ENCODE measurements at regions of chr10 and their contacts with region 1.

Region 1: DNA sequence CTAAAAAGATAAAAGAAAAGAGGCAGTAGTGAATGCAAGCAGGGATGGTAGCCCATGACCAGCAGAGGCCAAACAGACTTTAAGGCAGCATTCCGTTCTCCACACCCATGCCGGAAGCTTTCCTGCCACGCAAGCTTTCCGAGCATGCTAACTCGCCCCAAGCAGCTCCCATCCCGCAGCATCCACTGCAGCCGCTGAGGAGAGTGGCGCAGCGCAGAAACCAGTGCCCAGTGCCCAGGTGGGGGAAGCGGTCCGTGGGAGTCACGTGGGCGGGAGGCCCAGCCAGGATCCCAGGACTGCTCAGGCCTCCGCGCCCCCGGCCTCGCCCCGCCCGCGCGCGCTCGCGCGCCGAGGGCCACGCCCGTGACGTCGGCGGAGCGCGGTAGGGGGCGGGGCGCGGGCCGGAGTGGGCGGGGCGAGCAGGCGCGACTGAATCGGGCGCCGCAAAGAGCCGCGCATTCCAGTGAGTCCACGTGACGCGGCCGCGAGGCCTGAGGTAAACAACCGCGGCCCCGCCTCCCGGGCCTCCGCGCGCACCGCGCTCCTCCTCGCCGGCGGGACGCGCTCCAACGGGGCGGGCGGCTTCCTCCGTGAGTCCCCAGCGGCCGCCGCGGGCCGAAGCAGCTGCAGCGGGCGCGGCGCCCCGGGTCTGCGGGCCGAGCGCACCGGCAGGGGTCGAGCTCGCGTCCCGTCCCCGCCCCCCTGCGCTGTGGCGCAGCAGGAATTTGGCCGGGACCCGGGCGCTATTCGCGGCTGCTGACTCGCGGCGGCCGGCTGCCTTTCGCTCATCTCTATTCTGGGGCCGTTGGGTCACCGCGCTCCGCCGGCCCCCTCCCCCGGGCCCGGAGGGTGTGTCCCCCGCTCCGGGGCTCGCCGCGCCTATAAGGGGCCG is at the start of gene OTUD1:
- DNase-seq: peak; percentile 100
- ATAC-seq: peak; percentile 95
- total RNA-seq, gene OTUD1: 13.3 TPM

Region 2: DNA sequence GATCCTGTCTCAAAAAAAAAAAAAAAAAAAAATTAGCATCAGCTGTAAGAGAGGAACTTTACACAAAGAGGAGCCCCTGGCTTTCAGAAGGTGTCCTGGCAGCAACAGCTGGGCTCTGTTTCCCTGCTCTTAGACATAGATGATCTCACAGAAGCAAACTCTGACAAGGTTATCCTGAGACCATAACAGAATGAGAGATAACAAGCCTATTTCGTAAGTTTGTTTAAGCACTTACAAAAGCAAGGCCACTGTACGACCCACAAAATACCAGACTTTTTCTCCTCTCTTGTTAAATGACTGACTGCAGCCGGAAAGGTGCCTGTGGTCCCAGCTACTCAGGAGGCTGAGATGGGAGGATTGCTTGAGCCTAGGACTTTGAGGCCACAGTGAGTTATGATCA is 33.3 kb before region 1 on chr10:
- intact Hi-C with region 1: loop called (anchors 1 kb)
- DNase-seq: no peak
- ATAC-seq: peak; percentile 72

Region 3: DNA sequence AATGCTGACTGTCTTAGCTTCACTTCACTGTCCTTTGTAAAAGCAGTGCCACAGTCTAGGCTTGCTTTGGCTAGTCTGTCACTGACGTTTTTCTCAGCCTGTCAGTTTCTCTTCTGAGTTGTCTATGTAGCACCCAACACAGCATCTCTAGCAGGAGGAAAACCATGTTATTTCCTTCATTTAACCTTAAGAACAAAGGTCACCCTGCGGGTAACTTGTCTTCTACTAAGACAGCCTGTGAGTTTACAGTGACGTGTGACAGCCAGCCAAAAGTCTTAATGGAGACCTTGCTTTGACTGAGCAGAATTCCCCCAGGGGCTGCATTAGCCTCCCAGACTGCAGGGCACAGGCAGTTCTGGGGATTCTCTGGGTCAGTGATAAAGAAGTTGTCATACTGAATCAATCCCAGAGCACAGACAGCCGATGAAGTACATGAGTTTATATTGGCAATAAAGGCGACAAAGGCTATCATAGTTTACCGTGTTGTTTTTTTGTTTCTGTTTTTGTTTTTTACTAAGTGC is 474.1 kb after region 1 on chr10:
- intact Hi-C with region 1: no loop called
- DNase-seq: no peak
- ATAC-seq: no peak